ENCODE measurements at regions of chr5 and their contacts with region 1.

Region 1: GRCh38 chr5:56951946-56952691 is at the start of gene MIER3:
- DNase-seq: peak; percentile 88
- H3K4me3 ChIP-seq: peak within 1 kb of the TSS; percentile 70 to 95 (median 93)
- H3K27ac ChIP-seq: peak within 1 kb of the TSS; percentile 87 to 95 (median 92)
- H3K4me1 ChIP-seq: peaks cover 0 to 21% (median 16%) of the 10 kb centered on the region in 4 donors
- H3K27me3 ChIP-seq: no peaks in the 10 kb centered on the region
- CTCF ChIP-seq: no peak
- EP300 ChIP-seq: no peak
- POLR2A ChIP-seq: no peak
- total RNA-seq, gene MIER3: 12.5 to 46.4 (median 21.7) TPM

Region 2: GRCh38 chr5:56909294-56910209 is 42.6 kb before region 1 on chr5 and contains the start of gene SETD9:
- intact Hi-C with region 1: loop called (anchors 1 kb)
- DNase-seq: peak; percentile 99
- H3K4me3 ChIP-seq: peak within 1 kb of the TSS; percentile 54 to 73 (median 69)
- H3K27ac ChIP-seq: peak within 1 kb of the TSS; percentile 90 to 98 (median 96)
- H3K4me1 ChIP-seq: peaks cover 0 to 9% (median 7%) of the 10 kb centered on the region in 4 donors
- H3K27me3 ChIP-seq: no peaks in the 10 kb centered on the region
- CTCF ChIP-seq: no peak
- EP300 ChIP-seq: no peak
- POLR2A ChIP-seq: peak; percentile 68 to 69
- total RNA-seq, gene SETD9: 6.6 to 30.7 (median 19.4) TPM

Measured in sigmoid colon (tissue), 7 donors.